Naive thymus-derived CD8-positive, alpha-beta T cell (primary cell): ENCODE measurements at regions of chr16 and their contacts with region 1.

Region 1: GRCh38 chr16:3282730-3283524 is at the start of gene ZNF263:
- DNase-seq: peak; percentile 88 to 98 (median 92)
- ATAC-seq: peak; percentile 89 to 90
- H3K4me3 Mint-ChIP-seq: peak within 1 kb of the TSS; percentile 90 to 98 (median 96)
- H3K27ac Mint-ChIP-seq: peak within 1 kb of the TSS; percentile 94 to 99 (median 98)
- H3K4me1 Mint-ChIP-seq: peaks cover 15 to 47% (median 39%) of the 10 kb centered on the region in 4 donors
- H3K27me3 Mint-ChIP-seq: no peaks in the 10 kb centered on the region
- polyA plus RNA-seq, gene ZNF263: 33.9 to 62.2 (median 54.2) TPM

Region 2: GRCh38 chr16:3182608-3183444 is 100.1 kb before region 1 on chr16:
- POLR2A ChIA-PET with region 1: interaction called, 11 read pairs
- DNase-seq: peak in 6 of 10 donors; percentile 15 to 79 (median 40)
- ATAC-seq: peak; percentile 50 to 65
- H3K4me3 Mint-ChIP-seq: peak overlapping the region; percentile 70 to 90 (median 84)
- H3K27ac Mint-ChIP-seq: peak overlapping the region in 5 of 10 donors; percentile 24 to 85 (median 73)
- H3K4me1 Mint-ChIP-seq: peaks cover 18 to 32% (median 25%) of the 10 kb centered on the region in 4 donors
- H3K27me3 Mint-ChIP-seq: peaks cover 38 to 83% (median 69%) of the 10 kb centered on the region in 5 donors

Region 3: DNA sequence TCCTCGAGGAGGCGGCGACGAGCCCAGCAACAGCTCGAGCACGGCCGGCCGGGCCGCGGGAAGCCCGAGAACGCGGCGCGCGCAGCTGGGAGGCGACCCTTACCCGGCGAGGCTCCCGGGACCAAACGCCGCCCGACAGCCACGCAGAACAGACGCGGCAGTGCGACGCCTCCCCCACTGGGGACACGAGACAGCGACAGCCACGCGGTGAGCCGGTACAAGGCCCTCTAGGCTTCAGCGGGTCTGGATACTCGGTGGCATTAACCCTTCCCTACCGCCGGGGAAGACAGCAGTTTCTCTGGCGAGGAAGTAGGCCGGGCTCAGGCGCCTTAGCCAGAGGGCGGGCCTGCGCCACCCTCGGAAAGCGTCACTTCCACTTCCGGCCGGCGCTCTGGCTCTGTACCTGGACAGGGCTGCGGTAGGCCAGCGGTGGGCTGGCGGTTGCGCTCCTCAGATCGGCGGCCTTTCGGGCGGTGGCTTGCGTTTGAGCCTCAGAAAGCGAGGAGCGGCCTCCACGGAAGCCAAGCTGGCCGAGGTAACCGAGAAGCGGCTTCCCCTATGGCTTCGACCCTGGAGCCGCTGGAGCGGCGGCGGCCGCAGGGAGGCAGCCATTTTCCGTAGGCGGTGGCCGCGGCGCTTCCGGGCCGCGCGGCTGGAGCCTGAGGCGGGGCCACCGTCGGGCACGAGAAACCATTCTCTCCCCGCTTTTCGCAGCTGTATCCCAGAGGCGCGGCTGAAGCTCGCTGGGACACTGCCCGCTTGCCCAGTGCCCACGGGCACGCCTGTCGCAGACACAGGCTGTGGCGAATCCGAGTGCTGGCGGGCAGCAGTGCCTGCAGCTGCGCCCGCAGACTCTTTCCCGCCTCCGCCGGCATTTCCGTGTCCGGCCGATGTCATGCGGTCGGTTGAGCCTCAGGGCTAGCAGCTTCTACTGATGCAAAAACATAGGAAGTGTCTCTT is 22.5 kb after region 1 on chr16 and contains the starts of genes TIGD7 and ZNF75A:
- POLR2A ChIA-PET with region 1: interaction called, 59 read pairs
- DNase-seq: peak; percentile 67 to 93 (median 84)
- ATAC-seq: peak; percentile 93 to 96
- H3K4me3 Mint-ChIP-seq: peak within 1 kb of the TSS; percentile 75 to 90 (median 84)
- H3K27ac Mint-ChIP-seq: peak within 1 kb of the TSS; percentile 37 to 94 (median 84)
- H3K4me1 Mint-ChIP-seq: peaks cover 9 to 31% (median 20%) of the 10 kb centered on the region in 4 donors
- H3K27me3 Mint-ChIP-seq: no peaks in the 10 kb centered on the region
- polyA plus RNA-seq, gene TIGD7: 5.8 to 7.0 (median 5.8) TPM
- polyA plus RNA-seq, gene ZNF75A: 18.2 to 32.3 (median 23.6) TPM

Region 4: DNA sequence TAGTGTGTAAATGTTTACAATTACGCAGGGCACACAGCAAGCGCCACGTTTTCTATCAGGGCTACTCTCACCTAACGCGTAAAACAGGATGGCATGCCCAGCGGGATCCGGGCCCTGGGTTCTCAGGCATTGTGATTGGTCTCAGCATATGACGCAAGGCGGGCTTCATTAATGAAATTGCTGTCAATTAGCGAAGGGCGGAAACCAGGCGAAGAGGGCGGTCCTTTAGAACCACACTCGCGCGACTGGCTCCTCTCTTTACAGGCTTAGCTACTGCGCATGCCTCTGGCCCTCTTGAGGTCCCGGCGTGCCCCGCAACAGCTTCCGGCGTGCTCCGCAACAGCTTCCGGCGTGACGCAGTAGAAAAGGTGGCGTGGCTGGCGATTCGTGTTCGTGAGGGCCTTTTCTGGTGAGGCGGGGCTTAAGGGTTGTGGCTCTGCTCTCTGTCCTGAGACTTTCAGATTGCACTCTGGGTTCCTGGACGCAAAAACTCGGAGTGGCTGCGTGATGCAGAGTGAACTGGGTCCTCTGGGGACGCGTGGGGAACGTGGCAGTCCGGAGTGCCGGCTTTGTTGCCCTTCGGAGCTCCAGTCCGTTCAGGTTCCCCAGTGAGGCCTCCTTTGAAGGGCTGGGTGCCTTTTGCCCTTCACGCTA is 82.0 kb after region 1 on chr16:
- POLR2A ChIA-PET with region 1: interaction called, 20 read pairs
- DNase-seq: peak; percentile 69 to 96 (median 89)
- ATAC-seq: peak; percentile 93
- H3K4me3 Mint-ChIP-seq: peak overlapping the region; percentile 77 to 93 (median 86)
- H3K27ac Mint-ChIP-seq: peak overlapping the region; percentile 84 to 96 (median 92)
- H3K4me1 Mint-ChIP-seq: peaks cover 4 to 12% (median 6%) of the 10 kb centered on the region in 4 donors
- H3K27me3 Mint-ChIP-seq: peaks cover 13 to 19% (median 15%) of the 10 kb centered on the region in 5 donors

Region 5: GRCh38 chr16:3400779-3401688 is 118.1 kb after region 1 on chr16 and contains the starts of genes ZNF174 and ZSCAN32:
- POLR2A ChIA-PET with region 1: interaction called, 41 read pairs
- DNase-seq: peak; percentile 94 to 99 (median 98)
- ATAC-seq: peak; percentile 95 to 97
- H3K4me3 Mint-ChIP-seq: peak within 1 kb of the TSS; percentile 88 to 97 (median 95)
- H3K27ac Mint-ChIP-seq: peak within 1 kb of the TSS; percentile 85 to 96 (median 90)
- H3K4me1 Mint-ChIP-seq: peaks cover 29 to 70% (median 55%) of the 10 kb centered on the region in 4 donors
- H3K27me3 Mint-ChIP-seq: no peaks in the 10 kb centered on the region
- polyA plus RNA-seq, gene ZNF174: 12.3 to 18.8 (median 14.0) TPM
- polyA plus RNA-seq, gene ZSCAN32: 8.6 to 20.8 (median 19.0) TPM

Region 6: DNA sequence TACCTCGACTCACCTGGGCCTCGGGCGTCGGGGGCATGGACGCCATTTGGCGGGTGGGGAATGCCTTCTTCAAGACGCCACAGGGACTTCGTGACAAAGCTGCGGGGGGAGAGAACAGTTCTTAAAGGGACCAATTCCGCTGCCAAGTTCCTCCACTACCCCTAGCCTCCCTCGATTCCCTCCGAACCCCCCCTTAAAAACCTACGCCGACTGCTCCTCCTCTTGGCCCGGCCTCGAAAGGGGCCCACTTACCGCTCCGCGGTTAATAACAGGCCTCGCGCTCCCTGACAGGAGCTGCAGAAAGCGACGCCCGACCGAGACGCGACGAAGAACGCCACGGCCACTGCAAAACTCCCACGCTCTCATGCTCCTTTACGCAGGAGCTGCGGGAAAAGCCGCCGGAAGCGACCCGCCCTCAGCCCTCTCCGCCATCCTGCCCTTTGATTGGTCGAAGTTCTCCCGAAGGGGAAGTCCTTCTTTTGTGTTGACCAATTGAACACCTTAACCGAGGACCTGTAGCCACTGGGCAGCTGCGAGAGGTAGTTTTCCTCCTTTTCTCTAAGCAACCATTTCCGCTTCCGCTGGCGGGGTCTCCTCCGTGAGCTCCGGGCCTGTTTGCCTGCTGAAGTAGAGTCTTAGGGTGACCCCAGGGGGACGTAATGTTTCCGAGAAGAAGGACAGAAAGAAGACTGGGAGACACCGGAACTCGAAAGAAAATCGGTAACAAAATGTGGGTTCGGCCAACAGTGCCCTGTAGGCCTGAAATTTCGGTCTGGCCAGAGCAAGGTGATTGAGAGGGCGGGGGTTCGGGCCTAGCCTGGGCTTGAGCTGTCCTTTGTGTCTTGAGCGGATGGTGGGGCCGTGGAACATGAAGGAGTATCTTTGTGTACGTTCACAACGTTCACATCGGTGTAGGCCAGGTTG is 160.4 kb after region 1 on chr16 and contains the starts of genes NAA60 and ZNF597:
- POLR2A ChIA-PET with region 1: interaction called, 21 read pairs
- DNase-seq: peak; percentile 54 to 89 (median 80)
- ATAC-seq: peak; percentile 93 to 97
- H3K4me3 Mint-ChIP-seq: peak within 1 kb of the TSS; percentile 92 to 99 (median 95)
- H3K27ac Mint-ChIP-seq: peak within 1 kb of the TSS; percentile 88 to 99 (median 96)
- H3K4me1 Mint-ChIP-seq: peaks cover 5 to 48% (median 28%) of the 10 kb centered on the region in 4 donors
- H3K27me3 Mint-ChIP-seq: no peaks in the 10 kb centered on the region
- polyA plus RNA-seq, gene NAA60: 36.9 to 56.1 (median 44.4) TPM
- polyA plus RNA-seq, gene ZNF597: 1.1 to 2.3 (median 1.9) TPM

Region 7: GRCh38 chr16:3457434-3458252 is 174.7 kb after region 1 on chr16:
- POLR2A ChIA-PET with region 1: interaction called, 33 read pairs
- DNase-seq: peak; percentile 85 to 93 (median 91)
- ATAC-seq: peak; percentile 83 to 85
- H3K4me3 Mint-ChIP-seq: peak overlapping the region; percentile 71 to 89 (median 84)
- H3K27ac Mint-ChIP-seq: peak overlapping the region; percentile 84 to 96 (median 92)
- H3K4me1 Mint-ChIP-seq: peaks cover 26 to 52% (median 43%) of the 10 kb centered on the region in 4 donors
- H3K27me3 Mint-ChIP-seq: no peaks in the 10 kb centered on the region